ENCODE measurements at regions of chr5 and their contacts with region 1.

Region 1: GRCh38 chr5:100903039-100903887 is at the start of gene ST8SIA4:
- DNase-seq: peak; percentile 96
- ATAC-seq: peak; percentile 69
- H3K4me3 Mint-ChIP-seq: peak within 1 kb of the TSS; percentile 97
- H3K27ac Mint-ChIP-seq: peak within 1 kb of the TSS; percentile 98
- H3K4me1 Mint-ChIP-seq: peaks cover 30% of the 10 kb centered on the region
- H3K27me3 Mint-ChIP-seq: no peaks in the 10 kb centered on the region
- total RNA-seq, gene ST8SIA4: 31.7 to 32.0 TPM

Region 2: DNA sequence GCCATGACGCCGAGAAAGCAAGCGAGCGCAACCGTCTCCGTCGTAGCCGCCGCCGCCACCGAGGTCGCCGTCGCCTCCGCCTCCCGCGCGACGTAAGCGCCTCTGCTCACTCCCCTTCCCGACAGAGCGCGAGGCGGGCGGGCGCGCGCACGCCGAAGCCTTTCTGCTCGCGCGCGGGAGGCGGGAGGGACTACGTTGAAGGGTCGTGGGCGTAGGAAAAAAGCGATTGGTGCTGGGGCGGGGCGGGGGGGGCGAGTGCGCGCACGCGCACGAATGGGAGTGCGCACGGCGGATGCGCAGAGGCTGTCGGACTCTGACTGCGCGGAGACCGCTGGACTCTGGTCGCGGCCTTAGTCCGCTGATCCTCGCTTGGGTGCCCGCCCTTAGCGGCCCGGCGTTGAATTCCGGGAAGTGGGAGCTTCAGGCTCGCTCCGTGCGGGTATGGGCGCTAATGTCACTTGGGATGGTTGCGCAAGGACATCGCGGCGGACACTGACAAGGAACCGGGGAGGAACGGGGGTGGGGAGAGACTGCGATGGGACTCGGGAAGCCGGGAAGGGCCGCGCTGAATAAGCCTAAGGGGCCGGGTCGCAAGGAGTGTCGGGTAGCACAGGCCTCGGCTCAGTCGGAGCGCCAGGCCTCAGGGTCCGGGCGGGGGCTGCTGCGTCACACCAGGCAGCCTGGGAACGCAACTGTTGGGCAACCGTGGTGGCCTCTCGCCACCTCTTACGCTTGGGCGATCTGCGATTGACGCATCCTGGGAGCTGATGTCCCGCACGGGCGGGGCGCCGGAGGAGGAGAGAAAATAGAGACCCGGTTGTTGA is 1974.2 kb before region 1 on chr5 and contains the start of gene CHD1:
- CTCF ChIA-PET with region 1: no interaction called
- POLR2A ChIA-PET with region 1: interaction called, 4 read pairs
- intact Hi-C with region 1: loop called in 1 of 2 experiments (anchors 1 kb)
- DNase-seq: peak; percentile 97
- ATAC-seq: peak; percentile 57
- H3K4me3 Mint-ChIP-seq: peak within 1 kb of the TSS; percentile 93
- H3K27ac Mint-ChIP-seq: peak within 1 kb of the TSS; percentile 99
- H3K4me1 Mint-ChIP-seq: peaks cover 56% of the 10 kb centered on the region
- H3K27me3 Mint-ChIP-seq: no peaks in the 10 kb centered on the region
- total RNA-seq, gene CHD1: 50.8 to 75.5 TPM

Region 3: GRCh38 chr5:100731768-100732167 is 171.5 kb before region 1 on chr5:
- CTCF ChIA-PET with region 1: interaction called, 5 read pairs
- POLR2A ChIA-PET with region 1: no interaction called
- intact Hi-C with region 1: loop called in 1 of 2 experiments (anchors 5 kb)
- DNase-seq: peak; percentile 13
- ATAC-seq: peak; percentile 78
- H3K4me3 Mint-ChIP-seq: peak overlapping the region; percentile 65
- H3K27ac Mint-ChIP-seq: peak overlapping the region; percentile 65
- H3K4me1 Mint-ChIP-seq: peaks cover 6% of the 10 kb centered on the region
- H3K27me3 Mint-ChIP-seq: no peaks in the 10 kb centered on the region

Region 4: GRCh38 chr5:100827481-100827889 is 75.8 kb before region 1 on chr5:
- CTCF ChIA-PET with region 1: interaction called, 9 read pairs
- POLR2A ChIA-PET with region 1: interaction called, 11 read pairs
- intact Hi-C with region 1: loop called in 1 of 2 experiments (anchors 1 kb)
- DNase-seq: no peak
- ATAC-seq: peak; percentile 31
- H3K4me3 Mint-ChIP-seq: no peak overlapping the region
- H3K27ac Mint-ChIP-seq: peak overlapping the region; percentile 85
- H3K4me1 Mint-ChIP-seq: peaks cover 42% of the 10 kb centered on the region
- H3K27me3 Mint-ChIP-seq: no peaks in the 10 kb centered on the region

Region 5: GRCh38 chr5:100852988-100853449 is 50.2 kb before region 1 on chr5:
- CTCF ChIA-PET with region 1: interaction called, 28 read pairs
- POLR2A ChIA-PET with region 1: interaction called, 5 read pairs
- intact Hi-C with region 1: loop called (anchors 1 to 2 kb)
- DNase-seq: no peak
- ATAC-seq: peak; percentile 88
- H3K4me3 Mint-ChIP-seq: peak overlapping the region; percentile 57
- H3K27ac Mint-ChIP-seq: peak overlapping the region; percentile 95
- H3K4me1 Mint-ChIP-seq: peaks cover 44% of the 10 kb centered on the region
- H3K27me3 Mint-ChIP-seq: no peaks in the 10 kb centered on the region

Region 6: DNA sequence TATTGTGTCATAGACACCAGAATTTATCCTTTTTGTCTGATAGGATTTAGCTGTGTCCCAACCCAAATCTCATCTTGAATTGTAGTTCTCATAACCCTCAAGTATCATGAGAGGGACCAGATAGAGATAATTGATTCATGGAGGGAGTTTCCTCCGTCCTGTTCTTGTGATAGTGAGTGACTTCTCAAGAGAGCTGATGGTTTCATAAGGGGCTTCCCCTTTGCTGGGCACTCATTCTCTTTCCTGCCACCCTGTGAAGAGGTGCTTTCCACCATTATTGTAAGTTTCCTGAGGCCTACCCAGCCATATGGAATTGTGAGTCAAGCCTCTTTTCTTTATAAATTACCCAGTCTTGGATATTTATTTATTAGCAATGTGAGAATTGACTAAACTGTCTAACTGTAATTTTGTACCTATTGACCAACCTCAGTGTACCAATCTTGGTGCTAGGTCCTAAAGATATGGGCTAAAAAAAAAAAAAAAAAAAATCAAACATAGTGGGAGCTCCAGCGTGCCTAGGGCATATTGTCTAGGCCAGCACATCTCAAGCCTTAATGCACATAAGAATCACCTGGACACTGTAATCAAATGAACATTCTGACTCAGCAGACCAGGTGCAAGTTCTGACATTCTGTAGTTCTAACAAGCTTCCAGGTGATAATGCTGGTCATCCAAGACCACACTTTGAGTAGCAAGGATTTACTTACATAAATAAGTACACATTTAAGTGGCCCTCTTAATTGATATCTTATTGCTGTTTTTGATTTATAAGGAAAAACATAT is 30.7 kb before region 1 on chr5:
- CTCF ChIA-PET with region 1: interaction called, 4 read pairs
- POLR2A ChIA-PET with region 1: interaction called, 8 read pairs
- intact Hi-C with region 1: loop called in 1 of 2 experiments (anchors 1 kb)
- DNase-seq: peak; percentile 44
- ATAC-seq: peak; percentile 97
- H3K4me3 Mint-ChIP-seq: no peak overlapping the region
- H3K27ac Mint-ChIP-seq: peak overlapping the region; percentile 82
- H3K4me1 Mint-ChIP-seq: peaks cover 60% of the 10 kb centered on the region
- H3K27me3 Mint-ChIP-seq: no peaks in the 10 kb centered on the region

Region 7: DNA sequence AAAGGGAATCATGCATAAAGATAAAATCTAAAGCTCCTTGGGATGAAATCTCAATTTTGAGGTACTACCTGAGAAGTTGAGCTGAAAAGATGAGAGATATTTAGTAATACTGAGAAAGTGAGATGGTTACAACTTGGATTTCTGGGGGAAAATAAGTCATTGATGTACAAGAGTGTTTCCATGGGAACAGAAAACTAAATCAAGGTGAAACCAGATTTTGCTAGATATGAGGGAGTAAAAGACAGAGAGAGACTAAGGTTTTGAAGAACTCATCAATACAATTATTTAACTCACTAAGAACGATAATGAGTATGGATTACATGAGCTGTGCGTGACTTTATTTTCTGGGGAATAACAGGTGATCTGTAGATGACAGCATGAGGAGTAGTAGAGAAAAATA is 10.0 kb after region 1 on chr5:
- CTCF ChIA-PET with region 1: interaction called, 4 read pairs
- POLR2A ChIA-PET with region 1: interaction called, 10 read pairs
- intact Hi-C with region 1: loop called in 1 of 2 experiments (anchors 1 kb)
- DNase-seq: no peak
- ATAC-seq: peak; percentile 86
- H3K4me3 Mint-ChIP-seq: no peak overlapping the region
- H3K27ac Mint-ChIP-seq: no peak overlapping the region
- H3K4me1 Mint-ChIP-seq: peaks cover 20% of the 10 kb centered on the region
- H3K27me3 Mint-ChIP-seq: no peaks in the 10 kb centered on the region

Region 8: GRCh38 chr5:100992354-100992753 is 89.1 kb after region 1 on chr5:
- CTCF ChIA-PET with region 1: no interaction called
- POLR2A ChIA-PET with region 1: no interaction called
- intact Hi-C with region 1: no loop called
- DNase-seq: no peak
- ATAC-seq: no peak
- H3K4me3 Mint-ChIP-seq: no peak overlapping the region
- H3K27ac Mint-ChIP-seq: no peak overlapping the region
- H3K4me1 Mint-ChIP-seq: no peaks in the 10 kb centered on the region
- H3K27me3 Mint-ChIP-seq: no peaks in the 10 kb centered on the region

Measured in activated CD4-positive, alpha-beta T cell treated with anti-CD3 and anti-CD28 coated beads for 36 hours (primary cell).